ENCODE measurements at regions of chr1 and their contacts with region 1.

Region 1: DNA sequence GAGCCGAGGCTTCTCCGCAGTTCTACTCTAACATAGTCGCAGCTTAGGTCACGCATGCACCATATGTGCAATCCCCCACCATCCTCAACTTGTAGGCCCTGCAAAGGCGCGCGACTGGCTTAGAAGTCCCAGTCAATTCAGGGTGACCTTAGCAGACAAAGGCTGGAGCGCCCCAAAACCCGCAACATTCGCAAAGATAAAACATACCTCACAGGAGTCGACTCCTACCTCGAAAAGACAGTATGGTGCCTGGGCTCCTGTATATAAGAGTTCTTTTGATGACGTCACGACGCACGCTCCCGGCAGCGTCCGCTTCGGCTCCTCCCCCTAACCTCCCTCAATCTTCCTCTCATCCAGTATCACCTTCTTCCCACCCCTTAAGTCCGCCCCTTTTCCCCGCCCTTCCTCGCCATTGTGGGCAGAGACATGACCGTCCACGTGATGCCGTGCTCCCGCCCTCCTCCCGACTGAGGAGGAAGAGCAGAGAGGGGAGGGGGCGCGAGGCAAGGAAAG is at the start of gene GAS5:
- DNase-seq: peak; percentile 100
- H3K4me3 Mint-ChIP-seq: peak within 1 kb of the TSS; percentile 94
- H3K27ac Mint-ChIP-seq: peak within 1 kb of the TSS; percentile 98
- H3K4me1 Mint-ChIP-seq: peaks cover 51% of the 10 kb centered on the region
- H3K27me3 Mint-ChIP-seq: no peaks in the 10 kb centered on the region
- total RNA-seq, gene GAS5: 1,367 to 1,374 TPM

Region 2: GRCh38 chr1:172870901-172871606 is 996.8 kb before region 1 on chr1:
- CTCF ChIA-PET with region 1: no interaction called
- intact Hi-C with region 1: loop called (anchors 5 kb)
- DNase-seq: no peak
- H3K4me3 Mint-ChIP-seq: no peak overlapping the region
- H3K27ac Mint-ChIP-seq: no peak overlapping the region
- H3K4me1 Mint-ChIP-seq: peaks cover 32% of the 10 kb centered on the region
- H3K27me3 Mint-ChIP-seq: peaks cover 24% of the 10 kb centered on the region

Region 3: DNA sequence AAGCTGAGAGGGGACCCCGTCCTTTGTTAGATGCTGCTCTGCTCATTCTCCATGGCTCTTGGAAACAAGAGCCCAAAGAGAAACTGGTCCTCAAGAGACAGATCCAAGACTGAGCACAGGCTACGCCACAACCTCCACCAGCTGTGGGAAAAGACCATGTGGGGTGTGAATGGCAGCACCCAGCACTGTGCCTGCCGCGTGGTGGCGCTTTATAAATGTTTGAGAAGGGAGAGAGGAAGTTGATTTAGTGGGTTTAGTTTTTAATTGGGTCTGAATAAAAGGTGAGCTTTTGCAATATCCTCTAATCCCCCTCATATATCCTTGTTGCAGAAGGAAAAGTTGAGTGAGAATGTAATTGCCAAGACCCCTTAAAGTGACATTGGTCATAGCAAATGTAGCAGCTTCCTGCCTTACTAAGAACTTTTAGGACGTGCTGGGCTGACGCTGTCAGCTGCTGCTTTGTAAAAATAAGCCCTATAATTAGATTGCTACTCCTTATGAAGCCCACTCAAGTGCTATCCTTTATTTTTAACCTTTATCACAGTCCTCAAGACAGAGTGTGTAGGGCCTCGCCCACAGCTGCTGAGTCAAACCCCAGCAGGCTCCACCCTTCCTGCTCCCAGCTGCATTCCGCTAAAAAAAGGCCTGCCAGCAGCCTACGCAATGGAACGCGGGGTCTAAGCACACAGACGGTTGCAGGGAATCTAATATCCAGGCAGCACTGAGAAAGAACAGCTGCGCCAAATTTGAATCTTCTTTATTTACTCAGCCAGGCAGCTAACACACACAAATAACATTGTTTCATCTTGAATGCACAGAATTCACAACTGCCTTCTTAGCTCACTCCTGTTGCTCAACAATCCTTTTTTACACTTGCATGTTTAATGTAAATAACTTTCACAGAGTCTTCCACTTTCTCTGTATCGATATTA is 438.1 kb before region 1 on chr1:
- CTCF ChIA-PET with region 1: interaction called, 4 read pairs
- intact Hi-C with region 1: loop called (anchors 1 kb)
- DNase-seq: peak; percentile 86
- H3K4me3 Mint-ChIP-seq: peak overlapping the region; percentile 42
- H3K27ac Mint-ChIP-seq: peak overlapping the region; percentile 43
- H3K4me1 Mint-ChIP-seq: peaks cover 16% of the 10 kb centered on the region
- H3K27me3 Mint-ChIP-seq: no peaks in the 10 kb centered on the region

Region 4: DNA sequence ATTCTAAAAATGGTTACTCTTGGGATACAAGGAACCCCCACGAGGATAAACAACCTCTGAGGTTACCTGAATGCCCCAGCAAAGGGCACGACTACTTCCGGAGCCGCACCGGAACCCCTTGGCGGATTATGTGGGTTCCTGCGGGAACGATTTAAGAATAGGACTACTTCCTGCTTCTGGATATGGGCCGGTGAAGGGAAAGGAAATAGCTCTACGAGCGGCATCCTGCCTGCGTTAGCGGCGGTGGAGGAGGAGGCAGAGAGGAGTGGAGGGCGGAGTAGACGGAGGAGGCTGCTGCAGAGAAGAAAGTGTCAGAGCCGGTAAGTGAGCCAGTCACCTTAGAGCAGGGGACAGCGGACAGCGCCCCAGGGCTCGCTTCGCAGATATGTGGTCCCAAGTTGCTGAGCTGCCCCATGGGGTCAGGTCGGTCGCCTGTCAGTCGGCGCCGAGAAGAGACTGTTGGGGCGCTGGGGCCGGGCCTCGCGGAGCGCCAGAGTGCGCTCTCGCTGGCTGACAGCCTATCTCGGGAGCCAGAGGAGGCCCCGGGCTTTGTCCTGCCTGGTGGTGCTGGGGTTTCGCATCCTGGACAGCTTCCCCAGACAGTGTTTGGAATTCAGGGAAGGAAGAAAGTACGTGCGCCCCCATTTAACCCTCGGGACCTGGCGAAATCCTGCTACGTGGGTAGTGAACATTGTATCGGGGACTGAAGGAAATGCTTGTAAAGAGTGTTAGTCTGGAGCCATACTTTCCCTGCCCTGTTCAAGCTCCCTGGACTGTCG is 152.9 kb before region 1 on chr1 and contains the start of gene KLHL20:
- CTCF ChIA-PET with region 1: no interaction called
- intact Hi-C with region 1: loop called (anchors 1 kb)
- DNase-seq: peak; percentile 91
- H3K4me3 Mint-ChIP-seq: peak within 1 kb of the TSS; percentile 97
- H3K27ac Mint-ChIP-seq: peak within 1 kb of the TSS; percentile 96
- H3K4me1 Mint-ChIP-seq: peaks cover 9% of the 10 kb centered on the region
- H3K27me3 Mint-ChIP-seq: peaks cover 15% of the 10 kb centered on the region
- total RNA-seq, gene KLHL20: 13.0 to 14.9 TPM

Region 5: GRCh38 chr1:174005032-174005431 is 137.2 kb after region 1 on chr1:
- CTCF ChIA-PET with region 1: no interaction called
- intact Hi-C with region 1: no loop called
- DNase-seq: no peak
- H3K4me3 Mint-ChIP-seq: no peak overlapping the region
- H3K27ac Mint-ChIP-seq: no peak overlapping the region
- H3K4me1 Mint-ChIP-seq: peaks cover 57% of the 10 kb centered on the region
- H3K27me3 Mint-ChIP-seq: no peaks in the 10 kb centered on the region

Region 6: DNA sequence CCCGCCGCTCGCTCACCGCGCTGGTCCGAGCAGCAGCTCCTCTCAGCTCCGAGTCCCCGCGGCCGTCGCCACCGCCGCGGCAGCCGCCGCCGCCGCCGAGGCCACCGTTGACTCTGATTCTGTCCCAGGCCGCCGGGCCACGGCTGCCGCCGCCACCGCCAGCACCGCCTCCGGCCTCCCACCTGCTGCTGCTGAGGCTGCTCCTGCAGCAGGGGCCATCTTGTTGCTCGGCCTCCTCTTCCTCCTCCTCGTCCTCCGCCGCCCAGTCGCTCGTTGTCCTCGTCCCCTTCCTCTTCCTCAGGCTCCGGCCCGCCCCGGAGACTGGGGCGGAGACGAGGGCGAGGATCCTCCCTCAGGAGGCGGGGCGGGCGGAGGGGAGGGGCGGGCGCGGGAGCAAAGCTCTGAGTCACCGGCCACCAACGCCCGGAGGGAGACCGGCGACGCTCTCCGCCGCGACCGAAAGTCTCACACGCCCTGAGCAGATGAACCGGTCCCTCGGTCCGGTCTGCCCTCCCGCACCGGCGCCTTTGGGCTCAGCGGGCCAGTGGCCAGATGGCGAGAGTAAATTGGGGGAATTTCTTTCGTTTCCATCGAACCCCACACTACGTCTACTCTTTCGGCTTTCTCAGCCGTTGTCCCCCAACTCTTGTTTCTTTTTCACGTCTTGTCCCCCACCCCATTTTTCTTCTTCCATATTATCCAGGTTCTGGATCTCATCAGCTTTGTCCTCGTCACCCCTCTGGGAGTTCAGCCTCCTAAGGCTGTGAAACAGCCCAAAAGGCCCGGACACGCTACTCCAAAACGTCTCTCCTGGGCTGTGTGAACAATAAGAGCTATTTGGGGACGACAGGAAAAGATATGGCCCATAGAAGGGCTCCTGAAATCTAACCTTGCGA is 154.5 kb after region 1 on chr1 and contains the start of gene RC3H1:
- CTCF ChIA-PET with region 1: no interaction called
- intact Hi-C with region 1: loop called (anchors 1 kb)
- DNase-seq: peak; percentile 92
- H3K4me3 Mint-ChIP-seq: peak within 1 kb of the TSS; percentile 93
- H3K27ac Mint-ChIP-seq: peak within 1 kb of the TSS; percentile 94
- H3K4me1 Mint-ChIP-seq: peaks cover 32% of the 10 kb centered on the region
- H3K27me3 Mint-ChIP-seq: no peaks in the 10 kb centered on the region
- total RNA-seq, gene RC3H1: 24.2 to 27.1 TPM

Region 7: DNA sequence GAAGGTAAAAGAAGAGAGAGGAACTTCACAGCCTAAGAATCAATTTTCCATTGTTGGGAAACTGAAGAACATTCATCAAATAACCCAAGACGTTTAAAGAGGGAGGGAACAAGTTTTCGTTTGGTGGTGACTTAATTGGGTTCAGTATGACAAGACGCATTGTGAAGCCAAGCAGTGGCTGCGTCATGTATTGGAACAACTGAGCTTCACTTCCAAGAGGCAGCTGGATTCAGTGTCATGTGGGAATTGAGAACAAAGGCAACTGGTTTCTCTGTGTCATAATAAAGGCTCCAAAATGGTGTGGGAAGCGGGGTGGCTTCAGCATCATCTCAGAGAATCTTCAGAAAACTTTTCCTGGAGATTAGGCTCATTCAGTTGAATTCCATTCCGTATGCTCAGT is 184.1 kb after region 1 on chr1:
- CTCF ChIA-PET with region 1: no interaction called
- intact Hi-C with region 1: no loop called
- DNase-seq: no peak
- H3K4me3 Mint-ChIP-seq: no peak overlapping the region
- H3K27ac Mint-ChIP-seq: no peak overlapping the region
- H3K4me1 Mint-ChIP-seq: peaks cover 3% of the 10 kb centered on the region
- H3K27me3 Mint-ChIP-seq: no peaks in the 10 kb centered on the region

Region 8: GRCh38 chr1:174153085-174153825 is 285.4 kb after region 1 on chr1:
- CTCF ChIA-PET with region 1: no interaction called
- intact Hi-C with region 1: loop called (anchors 1 kb)
- DNase-seq: no peak
- H3K4me3 Mint-ChIP-seq: no peak overlapping the region
- H3K27ac Mint-ChIP-seq: no peak overlapping the region
- H3K4me1 Mint-ChIP-seq: peaks cover 40% of the 10 kb centered on the region
- H3K27me3 Mint-ChIP-seq: no peaks in the 10 kb centered on the region

Region 9: GRCh38 chr1:174217787-174218574 is 350.2 kb after region 1 on chr1:
- CTCF ChIA-PET with region 1: no interaction called
- intact Hi-C with region 1: loop called (anchors 2 kb)
- DNase-seq: no peak
- H3K4me3 Mint-ChIP-seq: no peak overlapping the region
- H3K27ac Mint-ChIP-seq: no peak overlapping the region
- H3K4me1 Mint-ChIP-seq: peaks cover 6% of the 10 kb centered on the region
- H3K27me3 Mint-ChIP-seq: no peaks in the 10 kb centered on the region

Region 10: DNA sequence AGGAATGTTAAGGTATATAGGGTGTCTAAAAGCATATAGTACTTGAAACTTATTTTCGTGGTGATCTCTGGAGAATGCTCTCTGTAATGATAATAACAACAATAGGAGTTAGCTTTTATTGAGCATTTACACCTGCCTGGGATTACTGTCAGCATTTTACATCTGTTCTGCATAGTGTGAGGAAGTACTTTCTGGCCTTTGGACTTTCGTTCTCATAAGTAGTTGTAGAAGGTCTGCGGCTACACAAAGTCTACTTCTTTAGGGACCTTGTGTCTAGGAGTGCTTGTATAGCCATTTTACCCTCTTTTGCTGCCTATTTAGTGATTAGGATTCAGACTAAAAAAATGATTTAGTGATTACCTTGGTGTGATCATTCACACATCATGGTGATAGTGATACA is 476.4 kb after region 1 on chr1:
- CTCF ChIA-PET with region 1: no interaction called
- intact Hi-C with region 1: no loop called
- DNase-seq: no peak
- H3K4me3 Mint-ChIP-seq: no peak overlapping the region
- H3K27ac Mint-ChIP-seq: no peak overlapping the region
- H3K4me1 Mint-ChIP-seq: peaks cover 2% of the 10 kb centered on the region
- H3K27me3 Mint-ChIP-seq: no peaks in the 10 kb centered on the region